ENCODE measurements at regions of chr3 and their contacts with region 1.

Region 1: DNA sequence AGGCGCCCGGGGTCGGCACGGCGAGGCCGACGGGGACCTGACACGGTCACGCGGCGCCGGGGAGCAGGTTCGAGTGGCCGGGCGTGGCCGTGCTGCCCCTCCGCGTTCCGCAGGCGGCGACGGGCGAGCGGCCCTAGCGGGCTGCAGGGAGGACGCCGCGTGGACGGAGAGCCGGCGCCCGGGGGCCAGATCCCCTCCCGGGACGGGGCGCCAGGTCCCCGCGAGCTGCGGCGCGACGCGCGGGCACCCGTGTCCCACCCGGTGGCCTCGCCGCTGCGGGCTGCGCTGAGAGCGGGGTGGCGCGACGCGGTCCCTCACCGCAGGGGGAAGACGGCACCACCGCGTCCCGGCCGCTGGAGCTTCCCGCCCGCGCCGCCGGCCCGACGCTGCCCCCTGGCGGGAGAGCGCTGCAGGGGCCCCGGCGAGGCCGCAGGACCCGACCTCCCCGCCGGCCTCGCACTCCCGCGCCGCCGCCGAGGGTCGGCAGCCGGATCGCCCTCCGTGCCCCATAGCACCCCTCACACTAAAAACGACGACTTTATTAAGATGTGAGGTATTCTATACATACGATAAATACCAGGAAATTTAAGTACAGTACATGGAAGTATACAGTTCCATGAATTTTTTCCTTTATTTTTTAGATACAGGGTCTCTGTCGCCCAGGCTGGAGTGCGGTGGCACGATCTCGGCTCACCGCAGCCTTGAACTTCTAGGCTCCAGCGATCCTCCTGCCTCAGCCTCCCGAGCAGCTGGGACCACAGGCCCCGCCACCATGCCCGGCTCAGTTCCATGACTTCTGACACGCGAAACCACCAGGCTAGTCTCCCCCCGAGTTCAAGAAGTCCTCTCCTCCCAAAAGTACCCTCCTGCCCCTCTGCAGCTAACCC is 1.3 kb upstream of the PIGZ start:
- DNase-seq: peak; percentile 67
- H3K4me3 Mint-ChIP-seq: peak overlapping the region; percentile 86
- H3K27ac Mint-ChIP-seq: peak overlapping the region; percentile 86
- H3K4me1 Mint-ChIP-seq: peaks cover 17% of the 10 kb centered on the region
- H3K27me3 Mint-ChIP-seq: peaks cover 11% of the 10 kb centered on the region

Region 2: GRCh38 chr3:196537319-196537984 is 432.5 kb before region 1 on chr3:
- intact Hi-C with region 1: loop called (anchors 2 kb)
- DNase-seq: peak; percentile 33
- H3K4me3 Mint-ChIP-seq: no peak overlapping the region
- H3K27ac Mint-ChIP-seq: no peak overlapping the region
- H3K4me1 Mint-ChIP-seq: peaks cover 5% of the 10 kb centered on the region
- H3K27me3 Mint-ChIP-seq: peaks cover 12% of the 10 kb centered on the region

Region 3: GRCh38 chr3:196792794-196793193 is 177.1 kb before region 1 on chr3:
- intact Hi-C with region 1: no loop called
- DNase-seq: no peak
- H3K4me3 Mint-ChIP-seq: no peak overlapping the region
- H3K27ac Mint-ChIP-seq: no peak overlapping the region
- H3K4me1 Mint-ChIP-seq: peaks cover 9% of the 10 kb centered on the region
- H3K27me3 Mint-ChIP-seq: no peaks in the 10 kb centered on the region

Region 4: GRCh38 chr3:196837819-196838420 is 132.0 kb before region 1 on chr3:
- intact Hi-C with region 1: loop called (anchors 1 kb)
- DNase-seq: peak; percentile 58
- H3K4me3 Mint-ChIP-seq: no peak overlapping the region
- H3K27ac Mint-ChIP-seq: no peak overlapping the region
- H3K4me1 Mint-ChIP-seq: peaks cover 6% of the 10 kb centered on the region
- H3K27me3 Mint-ChIP-seq: no peaks in the 10 kb centered on the region

Region 5: GRCh38 chr3:196867507-196868296 is 102.2 kb before region 1 on chr3 and contains the start of gene SENP5:
- intact Hi-C with region 1: loop called (anchors 1 kb)
- DNase-seq: peak; percentile 86
- H3K4me3 Mint-ChIP-seq: peak within 1 kb of the TSS; percentile 100
- H3K27ac Mint-ChIP-seq: peak within 1 kb of the TSS; percentile 98
- H3K4me1 Mint-ChIP-seq: peaks cover 12% of the 10 kb centered on the region
- H3K27me3 Mint-ChIP-seq: peaks cover 4% of the 10 kb centered on the region
- total RNA-seq, gene SENP5: 45.3 and 50.7 TPM in 2 replicates

Region 6: GRCh38 chr3:196942226-196942914 is 27.5 kb before region 1 on chr3 and contains the start of gene NCBP2:
- intact Hi-C with region 1: loop called (anchors 1 kb)
- DNase-seq: peak; percentile 100
- H3K4me3 Mint-ChIP-seq: peak within 1 kb of the TSS; percentile 100
- H3K27ac Mint-ChIP-seq: peak within 1 kb of the TSS; percentile 97
- H3K4me1 Mint-ChIP-seq: peaks cover 55% of the 10 kb centered on the region
- H3K27me3 Mint-ChIP-seq: peaks cover 2% of the 10 kb centered on the region
- total RNA-seq, gene NCBP2: 102 and 111 TPM in 2 replicates

Region 7: DNA sequence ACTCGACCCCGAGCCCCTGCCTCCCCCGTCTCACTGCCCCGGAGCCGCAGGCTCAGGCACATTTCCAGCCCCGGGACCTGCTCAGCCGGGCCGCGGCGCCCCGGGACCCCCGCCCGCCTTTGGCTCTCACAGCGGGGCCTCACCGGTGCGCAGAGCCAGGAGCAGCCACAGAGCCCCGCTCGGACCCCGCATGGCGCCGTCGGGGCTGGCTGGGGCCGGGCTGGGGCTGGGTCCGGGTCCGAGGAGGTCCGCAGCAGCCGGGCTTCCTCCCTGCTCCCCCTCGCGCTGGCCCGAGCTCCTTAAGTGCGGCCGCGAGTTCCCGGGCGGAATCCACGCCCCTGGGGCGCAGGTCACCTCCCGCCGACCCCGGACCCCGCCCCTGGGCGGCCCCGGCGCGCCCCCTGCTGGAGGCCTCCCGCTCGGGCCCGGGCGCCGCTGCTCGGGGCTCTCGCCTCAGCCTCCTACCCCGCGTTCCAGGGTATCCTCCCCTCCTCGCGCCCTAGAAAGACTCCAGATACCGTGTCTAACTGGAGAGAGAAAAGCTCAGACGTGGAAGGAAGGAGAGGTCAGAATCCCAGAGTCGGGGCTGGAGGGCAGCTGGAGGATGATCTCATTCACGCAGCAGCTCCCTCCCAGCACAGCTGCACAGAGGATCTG is 59.7 kb after region 1 on chr3 and contains the start of gene MELTF:
- intact Hi-C with region 1: loop called (anchors 2 kb)
- DNase-seq: peak; percentile 71
- H3K4me3 Mint-ChIP-seq: peak within 1 kb of the TSS; percentile 74
- H3K27ac Mint-ChIP-seq: no peak within 1 kb of the TSS
- H3K4me1 Mint-ChIP-seq: no peaks in the 10 kb centered on the region
- H3K27me3 Mint-ChIP-seq: peaks cover 1% of the 10 kb centered on the region
- total RNA-seq, gene MELTF: 3.9 and 6.4 TPM in 2 replicates

Region 8: GRCh38 chr3:197801891-197802778 is 832.2 kb after region 1 on chr3:
- intact Hi-C with region 1: no loop called
- DNase-seq: no peak
- H3K4me3 Mint-ChIP-seq: no peak overlapping the region
- H3K27ac Mint-ChIP-seq: peak overlapping the region; percentile 42
- H3K4me1 Mint-ChIP-seq: peaks cover 39% of the 10 kb centered on the region
- H3K27me3 Mint-ChIP-seq: no peaks in the 10 kb centered on the region

Measured in activated T-helper 1 cell treated with anti-CD3 and anti-CD28 coated beads, Interleukin-12 subunit alpha, Interleukin-12 subunit beta, Interleukin-2, Interleukin-4 antibody, amounts not matched to agents 30 ng/mL and 10 ng/mL and 1 ng/mL, durations not matched to agents 14 hours and 24 hours and 36 hours (primary cell).